Heart right ventricle (tissue), 16 donors: ENCODE measurements at regions of chr4 and their contacts with region 1.

Region 1: GRCh38 chr4:126267689-126268088 is 952.9 kb downstream of the FAT4 start:
- DNase-seq: no peak
- ATAC-seq: no peak
- H3K4me3 ChIP-seq: no peak overlapping the region
- H3K27ac ChIP-seq: peak overlapping the region in 1 of 10 donors; percentile 1
- H3K4me1 ChIP-seq: peaks cover 0 to 14% (median 0%) of the 10 kb centered on the region in 9 donors
- H3K27me3 ChIP-seq: no peaks in the 10 kb centered on the region
- CTCF ChIP-seq: no peak

Region 2: GRCh38 chr4:126247409-126247808 is 20.3 kb before region 1 on chr4:
- intact Hi-C with region 1: loop called in 1 of 10 experiments (anchors 2 kb)
- DNase-seq: no peak
- ATAC-seq: no peak
- H3K4me3 ChIP-seq: no peak overlapping the region
- H3K27ac ChIP-seq: no peak overlapping the region
- H3K4me1 ChIP-seq: peaks cover 0 to 8% (median 0%) of the 10 kb centered on the region in 9 donors
- H3K27me3 ChIP-seq: no peaks in the 10 kb centered on the region
- CTCF ChIP-seq: no peak

Region 3: GRCh38 chr4:126820631-126821030 is 552.9 kb after region 1 on chr4:
- intact Hi-C with region 1: no loop called
- DNase-seq: no peak
- ATAC-seq: no peak
- H3K4me3 ChIP-seq: no peak overlapping the region
- H3K27ac ChIP-seq: no peak overlapping the region
- H3K4me1 ChIP-seq: no peaks in the 10 kb centered on the region
- H3K27me3 ChIP-seq: no peaks in the 10 kb centered on the region
- CTCF ChIP-seq: no peak